Calu3 (cell line): ENCODE measurements at regions of chr2 and their contacts with region 1.

Region 1: GRCh38 chr2:20225294-20226151 is 593 bp upstream of the SDC1 start:
- DNase-seq: peak; percentile 85
- H3K4me3 Mint-ChIP-seq: peak overlapping the region; percentile 69
- H3K27ac Mint-ChIP-seq: peak overlapping the region; percentile 30
- H3K4me1 Mint-ChIP-seq: peaks cover 32% of the 10 kb centered on the region
- H3K27me3 Mint-ChIP-seq: no peaks in the 10 kb centered on the region
- CTCF ChIP-seq: peak; percentile 47

Region 2: GRCh38 chr2:19598971-19599370 is 626.6 kb before region 1 on chr2:
- CTCF ChIA-PET with region 1: no interaction called
- intact Hi-C with region 1: loop called (anchors 5 kb)
- DNase-seq: no peak
- H3K4me3 Mint-ChIP-seq: no peak overlapping the region
- H3K27ac Mint-ChIP-seq: no peak overlapping the region
- H3K4me1 Mint-ChIP-seq: no peaks in the 10 kb centered on the region
- H3K27me3 Mint-ChIP-seq: no peaks in the 10 kb centered on the region
- CTCF ChIP-seq: no peak

Region 3: DNA sequence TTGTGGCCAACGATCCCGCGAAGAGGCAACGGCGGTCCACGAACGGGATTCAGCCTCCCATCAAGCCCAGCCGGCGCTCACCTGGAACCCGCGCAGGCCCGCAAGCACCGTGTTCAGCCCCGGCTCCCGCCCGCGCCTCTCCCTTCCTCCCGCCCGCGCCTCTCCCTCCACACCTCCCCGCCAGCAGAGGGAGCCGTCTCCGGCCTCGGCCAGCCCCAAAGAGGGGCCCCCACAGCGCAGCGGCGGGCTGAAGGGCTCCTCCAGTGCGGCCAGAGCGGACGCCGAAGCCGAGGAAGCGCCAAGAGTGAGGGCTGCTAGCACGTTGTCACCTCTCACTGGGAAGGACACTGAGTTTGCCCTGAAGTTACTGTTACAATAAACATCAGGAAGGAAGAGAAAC is 118.8 kb before region 1 on chr2:
- CTCF ChIA-PET with region 1: interaction called, 15 read pairs
- intact Hi-C with region 1: loop called (anchors 10 kb)
- DNase-seq: peak; percentile 93
- H3K4me3 Mint-ChIP-seq: peak overlapping the region; percentile 68
- H3K27ac Mint-ChIP-seq: peak overlapping the region; percentile 46
- H3K4me1 Mint-ChIP-seq: peaks cover 28% of the 10 kb centered on the region
- H3K27me3 Mint-ChIP-seq: no peaks in the 10 kb centered on the region
- CTCF ChIP-seq: peak; percentile 67

Region 4: GRCh38 chr2:20135631-20136050 is 89.9 kb before region 1 on chr2:
- CTCF ChIA-PET with region 1: interaction called, 9 read pairs
- intact Hi-C with region 1: loop called (anchors 5 kb)
- DNase-seq: peak; percentile 75
- H3K4me3 Mint-ChIP-seq: no peak overlapping the region
- H3K27ac Mint-ChIP-seq: no peak overlapping the region
- H3K4me1 Mint-ChIP-seq: peaks cover 26% of the 10 kb centered on the region
- H3K27me3 Mint-ChIP-seq: no peaks in the 10 kb centered on the region
- CTCF ChIP-seq: peak; percentile 79

Region 5: GRCh38 chr2:20186078-20186854 is 39.3 kb before region 1 on chr2:
- CTCF ChIA-PET with region 1: no interaction called
- intact Hi-C with region 1: loop called (anchors 5 kb)
- DNase-seq: peak; percentile 75
- H3K4me3 Mint-ChIP-seq: peak overlapping the region; percentile 50
- H3K27ac Mint-ChIP-seq: peak overlapping the region; percentile 68
- H3K4me1 Mint-ChIP-seq: peaks cover 54% of the 10 kb centered on the region
- H3K27me3 Mint-ChIP-seq: no peaks in the 10 kb centered on the region
- CTCF ChIP-seq: no peak

Region 6: GRCh38 chr2:20291106-20291564 is 65.6 kb after region 1 on chr2:
- CTCF ChIA-PET with region 1: interaction called, 7 read pairs
- intact Hi-C with region 1: loop called (anchors 2 kb)
- DNase-seq: peak; percentile 78
- H3K4me3 Mint-ChIP-seq: no peak overlapping the region
- H3K27ac Mint-ChIP-seq: no peak overlapping the region
- H3K4me1 Mint-ChIP-seq: peaks cover 11% of the 10 kb centered on the region
- H3K27me3 Mint-ChIP-seq: no peaks in the 10 kb centered on the region
- CTCF ChIP-seq: peak; percentile 69